ENCODE measurements at regions of chr12 and their contacts with region 1.

Region 1: GRCh38 chr12:96516472-96517430 is 27.4 kb downstream of the CFAP54 start:
- DNase-seq: peak; percentile 94
- ATAC-seq: peak; percentile 83
- H3K4me3 Mint-ChIP-seq: peak overlapping the region; percentile 21
- H3K27ac Mint-ChIP-seq: peak overlapping the region; percentile 64
- H3K4me1 Mint-ChIP-seq: peaks cover 17% of the 10 kb centered on the region
- H3K27me3 Mint-ChIP-seq: no peaks in the 10 kb centered on the region

Region 2: GRCh38 chr12:95918194-95918993 is 598.4 kb before region 1 on chr12:
- CTCF ChIA-PET with region 1: no interaction called
- POLR2A ChIA-PET with region 1: no interaction called
- intact Hi-C with region 1: loop called (anchors 1 kb)
- DNase-seq: peak; percentile 60
- ATAC-seq: peak; percentile 97
- H3K4me3 Mint-ChIP-seq: no peak overlapping the region
- H3K27ac Mint-ChIP-seq: no peak overlapping the region
- H3K4me1 Mint-ChIP-seq: no peaks in the 10 kb centered on the region
- H3K27me3 Mint-ChIP-seq: no peaks in the 10 kb centered on the region

Region 3: DNA sequence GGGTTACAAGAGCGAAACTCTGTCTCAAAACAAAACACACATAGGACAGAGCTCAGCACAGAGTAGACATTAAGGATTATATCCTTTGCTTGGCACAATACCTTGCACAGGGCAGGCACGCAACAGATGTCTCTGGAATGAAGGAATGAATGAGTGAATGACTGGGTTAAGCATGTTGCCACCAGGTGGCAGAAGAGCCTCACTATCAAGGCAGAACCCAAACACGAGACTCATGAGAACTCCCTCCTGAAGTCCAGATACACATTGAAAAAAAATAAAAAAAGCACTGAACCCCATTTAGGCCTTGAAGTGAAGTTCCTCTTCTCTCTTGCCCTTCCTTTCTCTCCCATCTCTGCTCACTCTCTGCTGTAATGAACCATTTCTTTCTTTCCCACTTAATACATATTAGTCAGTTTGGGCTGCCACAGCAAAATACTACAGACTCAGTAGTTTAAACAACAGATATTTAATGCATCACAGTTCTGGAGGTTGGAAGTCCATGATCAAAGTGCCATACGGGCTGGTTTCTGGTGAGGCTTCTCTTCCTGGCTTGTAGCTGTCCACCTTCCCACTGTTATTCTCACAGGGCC is 454.8 kb before region 1 on chr12:
- CTCF ChIA-PET with region 1: interaction called, 18 read pairs
- POLR2A ChIA-PET with region 1: no interaction called
- intact Hi-C with region 1: loop called (anchors 1 kb)
- DNase-seq: peak; percentile 87
- ATAC-seq: peak; percentile 91
- H3K4me3 Mint-ChIP-seq: no peak overlapping the region
- H3K27ac Mint-ChIP-seq: peak overlapping the region; percentile 47
- H3K4me1 Mint-ChIP-seq: peaks cover 23% of the 10 kb centered on the region
- H3K27me3 Mint-ChIP-seq: no peaks in the 10 kb centered on the region

Region 4: GRCh38 chr12:96445691-96446583 is 70.8 kb before region 1 on chr12:
- CTCF ChIA-PET with region 1: interaction called, 3 read pairs
- POLR2A ChIA-PET with region 1: no interaction called
- intact Hi-C with region 1: loop called in 1 of 2 experiments (anchors 1 kb)
- DNase-seq: peak; percentile 64
- ATAC-seq: peak; percentile 98
- H3K4me3 Mint-ChIP-seq: peak overlapping the region; percentile 56
- H3K27ac Mint-ChIP-seq: peak overlapping the region; percentile 96
- H3K4me1 Mint-ChIP-seq: peaks cover 45% of the 10 kb centered on the region
- H3K27me3 Mint-ChIP-seq: no peaks in the 10 kb centered on the region

Region 5: GRCh38 chr12:96501139-96501761 is 15.5 kb before region 1 on chr12:
- CTCF ChIA-PET with region 1: interaction called, 13 read pairs
- POLR2A ChIA-PET with region 1: no interaction called
- intact Hi-C with region 1: no loop called
- DNase-seq: peak; percentile 47
- ATAC-seq: peak; percentile 76
- H3K4me3 Mint-ChIP-seq: no peak overlapping the region
- H3K27ac Mint-ChIP-seq: peak overlapping the region; percentile 79
- H3K4me1 Mint-ChIP-seq: peaks cover 32% of the 10 kb centered on the region
- H3K27me3 Mint-ChIP-seq: no peaks in the 10 kb centered on the region

Region 6: DNA sequence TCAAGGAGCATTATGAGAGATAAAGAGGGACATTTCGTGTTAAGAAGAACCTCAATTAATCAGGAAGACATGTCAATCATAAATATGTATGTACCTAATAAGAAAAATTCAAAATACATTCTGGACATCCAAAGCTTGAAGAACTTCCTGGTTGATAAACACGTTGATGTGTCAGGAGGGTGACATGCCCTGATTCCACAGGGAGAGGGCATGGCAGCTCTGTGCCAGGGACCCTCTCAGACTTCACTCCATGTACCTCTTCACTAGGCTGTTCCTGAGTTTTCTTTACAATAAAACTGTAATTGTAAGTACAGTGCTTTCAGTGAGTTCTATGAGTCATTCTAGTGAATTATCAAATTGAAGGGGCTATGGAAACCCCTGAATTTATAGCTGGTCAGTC is 136.1 kb after region 1 on chr12:
- CTCF ChIA-PET with region 1: no interaction called
- POLR2A ChIA-PET with region 1: no interaction called
- intact Hi-C with region 1: no loop called
- DNase-seq: no peak
- ATAC-seq: no peak
- H3K4me3 Mint-ChIP-seq: no peak overlapping the region
- H3K27ac Mint-ChIP-seq: no peak overlapping the region
- H3K4me1 Mint-ChIP-seq: no peaks in the 10 kb centered on the region
- H3K27me3 Mint-ChIP-seq: peaks cover 2% of the 10 kb centered on the region

Region 7: DNA sequence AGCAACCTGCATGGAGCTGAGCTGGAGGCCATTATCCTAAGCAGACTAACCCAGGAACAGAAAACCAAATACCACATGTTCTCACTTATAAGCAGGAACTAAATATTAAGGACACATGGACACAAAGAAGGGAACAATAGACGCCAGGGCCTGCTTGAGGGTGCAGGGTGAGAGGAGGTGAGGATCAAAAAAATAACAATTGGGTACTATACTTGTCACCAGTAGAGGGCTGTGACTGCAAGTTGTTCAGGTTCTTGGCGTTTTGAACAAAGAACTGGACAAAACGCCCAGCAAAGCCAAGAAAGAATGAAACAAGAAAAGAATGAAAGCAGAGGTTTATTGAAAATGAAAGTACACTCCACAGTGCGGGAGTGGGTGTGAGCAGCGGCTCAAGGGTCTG is 181.8 kb after region 1 on chr12:
- CTCF ChIA-PET with region 1: no interaction called
- POLR2A ChIA-PET with region 1: no interaction called
- intact Hi-C with region 1: no loop called
- DNase-seq: no peak
- ATAC-seq: no peak
- H3K4me3 Mint-ChIP-seq: no peak overlapping the region
- H3K27ac Mint-ChIP-seq: no peak overlapping the region
- H3K4me1 Mint-ChIP-seq: no peaks in the 10 kb centered on the region
- H3K27me3 Mint-ChIP-seq: peaks cover 23% of the 10 kb centered on the region

Measured in activated CD4-positive, alpha-beta T cell treated with anti-CD3 and anti-CD28 coated beads for 36 hours (primary cell).